ENCODE measurements at regions of chr5 and their contacts with region 1.

Region 1: GRCh38 chr5:23208959-23209431 is 298.4 kb upstream of the PRDM9 start:
- DNase-seq: peak; percentile 76
- H3K4me3 Mint-ChIP-seq: no peak overlapping the region
- H3K27ac Mint-ChIP-seq: no peak overlapping the region
- H3K4me1 Mint-ChIP-seq: peaks cover 5% of the 10 kb centered on the region
- H3K27me3 Mint-ChIP-seq: no peaks in the 10 kb centered on the region
- CTCF ChIP-seq: peak; percentile 69

Region 2: DNA sequence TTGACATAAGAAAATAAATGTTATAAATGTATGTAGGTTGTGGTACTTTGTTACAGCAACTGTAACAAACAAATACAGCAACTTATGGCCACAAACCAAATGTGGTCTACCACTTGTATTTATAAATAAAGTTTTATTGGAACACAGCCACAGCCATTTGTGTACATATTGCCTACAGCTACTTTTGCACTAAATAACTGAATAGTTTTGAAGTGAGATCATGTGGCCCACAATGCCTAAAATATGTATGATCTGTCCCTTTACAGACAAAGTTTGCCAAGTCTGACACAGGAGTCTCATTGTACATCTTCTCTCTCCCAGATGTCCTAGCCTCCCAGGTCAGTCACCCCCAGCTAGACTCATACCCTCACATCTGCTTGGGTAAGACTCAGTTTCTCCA is 14.9 kb after region 1 on chr5:
- CTCF ChIA-PET with region 1: interaction called, 15 read pairs
- POLR2A ChIA-PET with region 1: interaction called, 3 read pairs
- intact Hi-C with region 1: no loop called
- DNase-seq: peak; percentile 16
- H3K4me3 Mint-ChIP-seq: no peak overlapping the region
- H3K27ac Mint-ChIP-seq: no peak overlapping the region
- H3K4me1 Mint-ChIP-seq: no peaks in the 10 kb centered on the region
- H3K27me3 Mint-ChIP-seq: no peaks in the 10 kb centered on the region
- CTCF ChIP-seq: no peak

Region 3: DNA sequence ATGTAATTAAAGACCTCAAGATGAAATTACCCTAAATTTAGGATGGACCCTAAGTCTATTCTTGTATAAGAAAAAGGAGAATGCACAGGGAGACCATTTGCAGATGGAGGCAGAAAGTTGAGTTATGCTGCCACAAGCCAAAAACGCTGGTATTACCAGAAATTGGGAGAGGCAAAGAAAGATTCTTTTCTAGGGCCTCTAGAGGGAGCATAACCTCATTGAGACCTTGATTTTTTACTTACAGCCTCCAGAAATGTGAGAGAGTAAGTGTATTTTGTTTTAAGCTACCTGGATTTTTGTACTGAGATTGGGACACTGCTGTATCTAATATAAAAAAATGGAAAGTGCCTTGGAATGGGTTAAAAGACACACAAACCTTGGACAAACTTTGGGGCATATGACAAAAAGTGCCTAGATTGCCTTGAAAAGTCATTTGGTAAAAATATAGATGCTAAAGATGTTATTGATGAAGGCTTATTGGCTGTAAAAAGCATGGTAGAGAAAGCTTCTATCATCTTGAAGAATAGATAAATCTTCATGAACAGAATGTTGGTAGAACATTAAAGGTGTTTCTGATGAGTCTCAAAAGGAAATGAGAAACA is 123.8 kb after region 1 on chr5:
- CTCF ChIA-PET with region 1: interaction called, 7 read pairs
- POLR2A ChIA-PET with region 1: no interaction called
- intact Hi-C with region 1: loop called (anchors 10 kb)
- DNase-seq: peak; percentile 51
- H3K4me3 Mint-ChIP-seq: no peak overlapping the region
- H3K27ac Mint-ChIP-seq: no peak overlapping the region
- H3K4me1 Mint-ChIP-seq: no peaks in the 10 kb centered on the region
- H3K27me3 Mint-ChIP-seq: no peaks in the 10 kb centered on the region
- CTCF ChIP-seq: peak; percentile 55

Region 4: GRCh38 chr5:23507278-23507685 is 298.3 kb after region 1 on chr5 and contains the start of gene PRDM9:
- CTCF ChIA-PET with region 1: interaction called, 5 read pairs
- POLR2A ChIA-PET with region 1: no interaction called
- intact Hi-C with region 1: loop called (anchors 1 kb)
- DNase-seq: peak; percentile 85
- H3K4me3 Mint-ChIP-seq: peak within 1 kb of the TSS; percentile 88
- H3K27ac Mint-ChIP-seq: peak within 1 kb of the TSS; percentile 88
- H3K4me1 Mint-ChIP-seq: no peaks in the 10 kb centered on the region
- H3K27me3 Mint-ChIP-seq: no peaks in the 10 kb centered on the region
- CTCF ChIP-seq: no peak
- total RNA-seq, gene PRDM9: not detected in 2 replicates

Region 5: GRCh38 chr5:23742701-23743100 is 533.7 kb after region 1 on chr5:
- CTCF ChIA-PET with region 1: interaction called, 5 read pairs
- POLR2A ChIA-PET with region 1: no interaction called
- intact Hi-C with region 1: loop called (anchors 1 kb)
- DNase-seq: peak; percentile 11
- H3K4me3 Mint-ChIP-seq: no peak overlapping the region
- H3K27ac Mint-ChIP-seq: no peak overlapping the region
- H3K4me1 Mint-ChIP-seq: no peaks in the 10 kb centered on the region
- H3K27me3 Mint-ChIP-seq: no peaks in the 10 kb centered on the region
- CTCF ChIP-seq: peak; percentile 17

Region 6: GRCh38 chr5:23756776-23757175 is 547.8 kb after region 1 on chr5:
- CTCF ChIA-PET with region 1: no interaction called
- POLR2A ChIA-PET with region 1: no interaction called
- intact Hi-C with region 1: no loop called
- DNase-seq: no peak
- H3K4me3 Mint-ChIP-seq: no peak overlapping the region
- H3K27ac Mint-ChIP-seq: no peak overlapping the region
- H3K4me1 Mint-ChIP-seq: peaks cover 6% of the 10 kb centered on the region
- H3K27me3 Mint-ChIP-seq: no peaks in the 10 kb centered on the region
- CTCF ChIP-seq: no peak

Region 7: GRCh38 chr5:23840084-23840483 is 631.1 kb after region 1 on chr5:
- CTCF ChIA-PET with region 1: interaction called, 4 read pairs
- POLR2A ChIA-PET with region 1: no interaction called
- intact Hi-C with region 1: loop called (anchors 1 kb)
- DNase-seq: peak; percentile 12
- H3K4me3 Mint-ChIP-seq: no peak overlapping the region
- H3K27ac Mint-ChIP-seq: no peak overlapping the region
- H3K4me1 Mint-ChIP-seq: no peaks in the 10 kb centered on the region
- H3K27me3 Mint-ChIP-seq: no peaks in the 10 kb centered on the region
- CTCF ChIP-seq: no peak

Region 8: GRCh38 chr5:24110004-24110615 is 901.1 kb after region 1 on chr5:
- CTCF ChIA-PET with region 1: interaction called, 4 read pairs
- POLR2A ChIA-PET with region 1: no interaction called
- intact Hi-C with region 1: loop called (anchors 1 kb)
- DNase-seq: peak; percentile 63
- H3K4me3 Mint-ChIP-seq: no peak overlapping the region
- H3K27ac Mint-ChIP-seq: no peak overlapping the region
- H3K4me1 Mint-ChIP-seq: no peaks in the 10 kb centered on the region
- H3K27me3 Mint-ChIP-seq: no peaks in the 10 kb centered on the region
- CTCF ChIP-seq: peak; percentile 68